CD14-positive monocyte (primary cell): ENCODE measurements at regions of chr11 and their contacts with region 1.

Region 1: GRCh38 chr11:6603287-6604080 is at the starts of genes ILK and RRP8:
- DNase-seq: peak; percentile 81 to 83 (median 83)
- H3K4me3 ChIP-seq: peak within 1 kb of the TSS; percentile 70 to 96 (median 93)
- H3K4me3 Mint-ChIP-seq: no peak within 1 kb of the TSS
- H3K27ac ChIP-seq: peak within 1 kb of the TSS; percentile 74 to 90
- H3K27ac Mint-ChIP-seq: peak within 1 kb of the TSS in 2 of 7 donors; percentile 63 to 78
- H3K4me1 ChIP-seq: peaks cover 53 to 59% of the 10 kb centered on the region in 2 donors
- H3K4me1 Mint-ChIP-seq: peaks cover 5% of the 10 kb centered on the region
- H3K27me3 ChIP-seq: no peaks in the 10 kb centered on the region
- H3K27me3 Mint-ChIP-seq: peaks cover 0 to 2% (median 0%) of the 10 kb centered on the region in 3 donors
- CTCF ChIP-seq: no peak
- polyA plus RNA-seq, gene ILK: 165 to 271 (median 250) TPM
- polyA plus RNA-seq, gene RRP8: 7.2 to 14.1 (median 11.9) TPM

Region 2: GRCh38 chr11:6481012-6481923 is 122.2 kb before region 1 on chr11 and contains the starts of genes ARFIP2 and TIMM10B:
- intact Hi-C with region 1: loop called in 1 of 2 experiments (anchors 10 kb)
- DNase-seq: peak; percentile 99 to 100 (median 99)
- H3K4me3 ChIP-seq: peak within 1 kb of the TSS; percentile 56 to 78 (median 64)
- H3K4me3 Mint-ChIP-seq: peak within 1 kb of the TSS; percentile 82 to 91
- H3K27ac ChIP-seq: peak within 1 kb of the TSS; percentile 97 to 98
- H3K27ac Mint-ChIP-seq: peak within 1 kb of the TSS; percentile 96 to 99 (median 98)
- H3K4me1 ChIP-seq: peaks cover 22 to 25% of the 10 kb centered on the region in 2 donors
- H3K4me1 Mint-ChIP-seq: peaks cover 31% of the 10 kb centered on the region
- H3K27me3 ChIP-seq: no peaks in the 10 kb centered on the region
- H3K27me3 Mint-ChIP-seq: peaks cover 0 to 2% (median 0%) of the 10 kb centered on the region in 3 donors
- CTCF ChIP-seq: no peak
- polyA plus RNA-seq, gene ARFIP2: 21.6 to 43.8 (median 27.2) TPM
- polyA plus RNA-seq, gene TIMM10B: 20.0 to 34.9 (median 22.1) TPM

Region 3: GRCh38 chr11:6619004-6619745 is 15.7 kb after region 1 on chr11 and contains the start of gene TPP1:
- intact Hi-C with region 1: loop called in 1 of 2 experiments (anchors 2 kb)
- DNase-seq: peak; percentile 90 to 93 (median 92)
- H3K4me3 ChIP-seq: peak within 1 kb of the TSS; percentile 61 to 95 (median 92)
- H3K4me3 Mint-ChIP-seq: no peak within 1 kb of the TSS
- H3K27ac ChIP-seq: peak within 1 kb of the TSS; percentile 96 to 99
- H3K27ac Mint-ChIP-seq: no peak within 1 kb of the TSS
- H3K4me1 ChIP-seq: peaks cover 34 to 47% of the 10 kb centered on the region in 2 donors
- H3K4me1 Mint-ChIP-seq: peaks cover 18% of the 10 kb centered on the region
- H3K27me3 ChIP-seq: no peaks in the 10 kb centered on the region
- H3K27me3 Mint-ChIP-seq: no peaks in the 10 kb centered on the region
- CTCF ChIP-seq: no peak
- polyA plus RNA-seq, gene TPP1: 218 to 359 (median 271) TPM

Region 4: DNA sequence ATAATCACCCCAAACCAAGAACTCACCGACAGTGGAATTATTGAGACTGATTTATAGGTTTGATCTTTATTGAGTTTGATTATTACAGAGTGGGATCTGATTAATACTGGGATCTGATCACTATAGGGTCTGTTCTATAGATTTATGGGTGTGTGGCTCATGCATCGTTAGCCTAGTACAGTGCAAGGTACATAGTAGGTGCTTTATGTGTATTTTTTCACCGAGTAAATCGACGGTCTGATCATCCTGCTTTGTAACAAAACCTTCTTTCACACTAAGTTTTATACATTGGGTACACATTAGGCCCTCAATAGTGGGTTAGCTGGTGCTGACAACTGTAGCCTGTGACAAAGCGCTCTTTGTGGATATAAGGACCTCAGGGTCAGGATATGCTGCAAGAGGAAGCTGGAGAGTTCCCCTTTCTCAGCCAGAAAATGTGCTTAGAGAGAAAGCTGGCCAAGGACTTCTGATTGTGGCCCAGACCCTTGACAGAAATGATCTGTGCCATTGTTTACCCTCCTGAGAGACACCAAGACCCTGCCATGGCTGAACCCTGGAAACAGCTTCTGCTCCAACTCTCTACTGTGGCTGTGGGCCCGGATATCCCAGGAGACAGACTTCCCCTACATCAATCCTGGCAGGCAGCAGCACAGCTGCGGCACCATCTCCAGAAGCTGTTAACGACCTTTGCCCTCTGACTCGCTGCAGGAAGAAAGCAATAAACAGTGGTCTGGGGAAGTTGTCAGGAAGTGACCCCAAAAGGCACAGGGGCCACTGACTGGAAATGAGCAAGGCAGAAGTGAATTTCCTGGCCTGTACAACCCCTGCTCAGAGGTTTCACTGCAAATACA is 31.8 kb after region 1 on chr11:
- intact Hi-C with region 1: loop called in 1 of 2 experiments (anchors 5 kb)
- DNase-seq: peak; percentile 67 to 84 (median 83)
- H3K4me3 ChIP-seq: peak overlapping the region in 1 of 3 experiments; percentile 35
- H3K4me3 Mint-ChIP-seq: peak overlapping the region in 1 of 2 donors; percentile 17
- H3K27ac ChIP-seq: peak overlapping the region; percentile 80 to 93
- H3K27ac Mint-ChIP-seq: peak overlapping the region in 1 of 7 donors; percentile 22
- H3K4me1 ChIP-seq: peaks cover 37 to 40% of the 10 kb centered on the region in 2 donors
- H3K4me1 Mint-ChIP-seq: no peaks in the 10 kb centered on the region
- H3K27me3 ChIP-seq: no peaks in the 10 kb centered on the region
- H3K27me3 Mint-ChIP-seq: peaks cover 0 to 2% (median 0%) of the 10 kb centered on the region in 3 donors
- CTCF ChIP-seq: no peak

Region 5: DNA sequence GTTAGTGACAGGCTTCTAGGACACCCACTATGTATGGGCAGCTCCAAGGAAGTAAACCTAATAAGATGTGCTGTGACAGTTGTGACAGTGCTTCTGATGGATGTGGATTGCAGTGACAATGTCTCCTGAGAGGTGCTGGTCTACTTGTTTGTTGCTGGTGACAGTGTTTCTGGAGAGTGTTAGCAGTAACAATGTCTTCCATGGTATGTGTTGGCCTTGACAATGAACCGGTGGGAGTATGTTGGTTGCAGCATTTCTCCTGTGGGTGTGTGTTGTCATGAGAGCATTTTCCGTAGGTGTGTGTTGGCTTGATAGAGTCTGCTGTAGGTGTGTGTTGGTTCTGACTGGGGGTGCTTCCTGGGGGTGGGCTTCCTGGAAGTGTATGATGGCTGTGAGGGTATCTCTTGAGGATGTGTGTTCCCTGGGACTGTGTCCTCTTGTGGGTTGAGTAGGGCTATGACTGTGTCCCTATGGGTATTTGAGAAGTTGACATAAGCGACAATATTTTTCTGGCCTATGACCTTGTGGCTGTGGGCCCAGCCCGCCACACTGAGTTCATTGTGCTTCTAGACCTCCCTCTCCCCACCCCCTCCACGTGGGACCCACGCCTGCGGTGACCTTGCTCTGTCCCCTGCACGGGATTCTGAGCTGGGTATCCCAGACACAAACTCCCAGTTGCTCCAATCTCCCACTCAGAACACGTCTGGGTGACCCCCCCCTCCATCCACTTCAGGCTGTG is 51.0 kb after region 1 on chr11:
- intact Hi-C with region 1: loop called in 1 of 2 experiments (anchors 5 kb)
- DNase-seq: no peak
- H3K4me3 ChIP-seq: peak overlapping the region in 1 of 3 experiments; percentile 48
- H3K4me3 Mint-ChIP-seq: no peak overlapping the region
- H3K27ac ChIP-seq: no peak overlapping the region
- H3K27ac Mint-ChIP-seq: no peak overlapping the region
- H3K4me1 ChIP-seq: peaks cover 4 to 10% of the 10 kb centered on the region in 2 donors
- H3K4me1 Mint-ChIP-seq: peaks cover 9% of the 10 kb centered on the region
- H3K27me3 ChIP-seq: peaks cover 31% of the 10 kb centered on the region in 2 donors
- H3K27me3 Mint-ChIP-seq: peaks cover 15 to 16% (median 15%) of the 10 kb centered on the region in 3 donors
- CTCF ChIP-seq: no peak

Region 6: DNA sequence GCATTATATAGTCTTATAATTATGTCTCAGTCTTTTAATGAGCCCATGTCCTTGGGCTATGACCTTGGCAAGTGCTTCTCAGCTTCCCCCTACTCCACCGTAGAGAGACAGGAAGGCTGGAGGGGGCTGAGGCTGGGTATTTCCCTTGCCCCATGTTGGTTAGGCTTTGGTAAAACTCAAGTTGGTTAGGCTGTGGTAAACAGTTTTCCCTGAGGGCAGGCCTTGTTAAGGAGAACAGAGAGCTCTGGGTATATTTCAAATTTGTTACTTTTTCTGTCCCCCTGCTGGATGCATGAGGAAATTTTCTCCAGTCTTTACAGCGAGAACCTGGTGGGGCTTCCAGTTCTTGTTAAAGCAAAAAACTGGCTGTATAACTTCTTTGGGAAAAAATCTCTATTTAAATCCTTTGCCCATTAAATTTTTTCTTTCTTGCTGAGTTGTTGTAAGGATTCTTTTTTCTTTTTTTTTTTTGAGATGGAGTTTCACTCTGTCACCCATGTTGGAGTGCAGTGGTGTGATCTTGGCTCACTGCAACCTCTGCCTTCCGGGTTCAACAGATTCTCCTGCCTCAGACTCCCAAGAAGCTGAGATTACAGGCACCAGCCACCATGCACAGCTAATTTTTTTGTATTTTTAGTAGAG is 64.4 kb after region 1 on chr11:
- intact Hi-C with region 1: loop called in 1 of 2 experiments (anchors 5 kb)
- DNase-seq: peak in 2 of 3 donors; percentile 51
- H3K4me3 ChIP-seq: no peak overlapping the region
- H3K4me3 Mint-ChIP-seq: no peak overlapping the region
- H3K27ac ChIP-seq: no peak overlapping the region
- H3K27ac Mint-ChIP-seq: peak overlapping the region in 2 of 7 donors; percentile 44 to 55
- H3K4me1 ChIP-seq: peaks cover 0 to 3% of the 10 kb centered on the region in 2 donors
- H3K4me1 Mint-ChIP-seq: peaks cover 6% of the 10 kb centered on the region
- H3K27me3 ChIP-seq: no peaks in the 10 kb centered on the region
- H3K27me3 Mint-ChIP-seq: peaks cover 1 to 6% (median 4%) of the 10 kb centered on the region in 3 donors
- CTCF ChIP-seq: peak; percentile 74

Region 7: DNA sequence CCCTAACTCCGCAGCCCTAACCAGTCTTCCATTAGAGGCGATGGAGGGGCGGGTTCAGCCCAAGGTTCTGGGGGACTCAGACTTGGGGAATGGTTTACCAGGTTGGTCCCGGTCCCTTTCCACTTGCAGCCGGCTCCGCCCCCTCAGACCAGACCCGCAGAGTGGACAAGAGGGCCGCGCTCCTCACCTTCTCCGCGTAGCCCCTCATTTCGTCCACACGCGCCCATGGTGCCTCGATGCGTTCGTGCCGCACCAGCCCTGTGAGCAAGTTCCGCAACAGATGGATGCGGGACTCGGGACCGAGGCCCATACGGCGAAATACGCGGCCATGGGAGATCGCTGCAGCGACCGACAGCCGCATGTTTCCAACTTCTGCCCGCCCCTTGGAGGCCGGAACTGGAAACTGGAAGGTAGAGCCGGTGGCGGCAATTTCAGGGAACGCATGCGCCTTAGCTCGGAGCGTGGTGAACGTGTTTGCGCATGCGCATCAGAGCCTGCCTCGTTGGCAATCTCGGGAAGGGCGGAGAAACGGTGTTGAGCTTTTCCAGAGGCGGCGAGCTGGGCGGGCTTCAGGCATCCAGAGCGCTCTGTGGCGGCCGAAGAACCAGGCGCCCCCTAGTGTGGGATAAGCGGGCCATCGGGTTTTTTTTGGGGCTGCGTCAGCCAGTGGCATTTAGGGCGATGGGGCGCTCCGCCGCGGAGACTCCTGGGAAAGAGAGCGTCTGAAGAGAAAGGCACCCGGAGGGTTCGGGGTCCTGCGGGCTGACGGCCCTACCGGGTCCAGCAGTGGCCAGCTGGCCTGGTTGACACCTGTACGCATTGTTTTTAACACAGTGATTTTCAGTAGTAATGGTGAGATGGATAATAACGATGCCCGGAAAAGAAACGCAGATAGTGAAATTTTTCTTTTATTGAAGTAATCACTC is 79.7 kb after region 1 on chr11 and contains the start of gene MRPL17:
- intact Hi-C with region 1: loop called (anchors 5 kb)
- DNase-seq: peak; percentile 99
- H3K4me3 ChIP-seq: peak within 1 kb of the TSS; percentile 64 to 96 (median 95)
- H3K4me3 Mint-ChIP-seq: peak within 1 kb of the TSS; percentile 97 to 99
- H3K27ac ChIP-seq: peak within 1 kb of the TSS; percentile 85 to 93
- H3K27ac Mint-ChIP-seq: peak within 1 kb of the TSS; percentile 88 to 99 (median 98)
- H3K4me1 ChIP-seq: peaks cover 16 to 19% of the 10 kb centered on the region in 2 donors
- H3K4me1 Mint-ChIP-seq: peaks cover 18% of the 10 kb centered on the region
- H3K27me3 ChIP-seq: no peaks in the 10 kb centered on the region
- H3K27me3 Mint-ChIP-seq: peaks cover 1 to 6% (median 6%) of the 10 kb centered on the region in 3 donors
- CTCF ChIP-seq: peak; percentile 83
- polyA plus RNA-seq, gene MRPL17: 8.0 to 14.0 (median 12.8) TPM